GM12878 (cell line): ENCODE measurements at regions of chr18 and their contacts with region 1.

Region 1: DNA sequence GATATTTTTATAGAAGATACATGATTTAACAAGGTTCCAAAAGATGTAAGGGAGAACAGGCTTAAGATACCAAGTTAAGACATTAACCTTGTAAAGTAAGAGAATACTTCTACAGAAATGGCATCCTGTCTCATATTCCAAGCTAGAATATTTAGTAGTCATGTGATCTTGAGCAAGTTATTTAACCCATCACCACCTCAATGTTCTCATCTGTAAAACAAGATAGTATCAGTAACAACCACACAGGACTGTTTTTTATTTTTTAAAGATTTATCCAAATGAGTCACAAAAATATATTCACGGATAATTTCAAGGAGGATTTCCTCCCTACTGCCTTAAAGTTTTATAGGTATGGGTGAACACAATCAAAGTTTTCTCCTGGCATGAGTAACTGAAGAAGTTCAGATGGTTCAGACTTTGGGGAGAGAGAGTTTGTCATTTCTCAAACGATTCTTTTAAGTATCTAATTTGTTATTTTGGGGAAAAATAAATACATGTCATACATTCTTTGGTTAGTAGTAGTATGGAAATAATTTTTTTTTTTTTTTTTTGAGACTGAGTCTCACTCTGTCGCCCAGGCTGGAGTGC is 25.9 kb downstream of the ROCK1 start:
- DNase-seq: no peak
- ATAC-seq: no peak
- H3K4me3 ChIP-seq: no peak overlapping the region
- H3K27ac ChIP-seq: no peak overlapping the region
- H3K4me1 ChIP-seq: no peaks in the 10 kb centered on the region
- H3K27me3 ChIP-seq: no peaks in the 10 kb centered on the region
- CTCF ChIP-seq: no peak
- EP300 ChIP-seq: no peak
- POLR2A ChIP-seq: no peak
- RAD21 ChIP-seq: no peak

Region 2: GRCh38 chr18:21105936-21106335 is 20.3 kb after region 1 on chr18:
- CTCF ChIA-PET with region 1: interaction called, 3 read pairs
- POLR2A ChIA-PET with region 1: no interaction called
- RAD21 ChIA-PET with region 1: interaction called, 3 read pairs
- SMC1A ChIA-PET with region 1: interaction called, 8 read pairs
- in situ Hi-C with region 1: no loop called
- intact Hi-C with region 1: loop called (anchors 2 kb)
- DNase-seq: no peak
- ATAC-seq: peak; percentile 71
- H3K4me3 ChIP-seq: peak overlapping the region; percentile 84
- H3K27ac ChIP-seq: no peak overlapping the region
- H3K4me1 ChIP-seq: no peaks in the 10 kb centered on the region
- H3K27me3 ChIP-seq: no peaks in the 10 kb centered on the region
- CTCF ChIP-seq: no peak
- EP300 ChIP-seq: no peak
- POLR2A ChIP-seq: no peak
- RAD21 ChIP-seq: no peak

Region 3: GRCh38 chr18:21230436-21230835 is 144.8 kb after region 1 on chr18:
- CTCF ChIA-PET with region 1: no interaction called
- POLR2A ChIA-PET with region 1: no interaction called
- RAD21 ChIA-PET with region 1: no interaction called
- SMC1A ChIA-PET with region 1: no interaction called
- in situ Hi-C with region 1: no loop called
- intact Hi-C with region 1: no loop called
- DNase-seq: no peak
- ATAC-seq: no peak
- H3K4me3 ChIP-seq: no peak overlapping the region
- H3K27ac ChIP-seq: no peak overlapping the region
- H3K4me1 ChIP-seq: no peaks in the 10 kb centered on the region
- H3K27me3 ChIP-seq: no peaks in the 10 kb centered on the region
- CTCF ChIP-seq: no peak
- EP300 ChIP-seq: no peak
- POLR2A ChIP-seq: no peak
- RAD21 ChIP-seq: no peak

Region 4: GRCh38 chr18:21509062-21509461 is 423.4 kb after region 1 on chr18:
- CTCF ChIA-PET with region 1: no interaction called
- POLR2A ChIA-PET with region 1: no interaction called
- RAD21 ChIA-PET with region 1: no interaction called
- SMC1A ChIA-PET with region 1: no interaction called
- in situ Hi-C with region 1: no loop called
- intact Hi-C with region 1: no loop called
- DNase-seq: no peak
- ATAC-seq: peak; percentile 18; the same call in 1 of the 3 replicates
- H3K4me3 ChIP-seq: no peak overlapping the region
- H3K27ac ChIP-seq: no peak overlapping the region
- H3K4me1 ChIP-seq: no peaks in the 10 kb centered on the region
- H3K27me3 ChIP-seq: no peaks in the 10 kb centered on the region
- CTCF ChIP-seq: no peak
- EP300 ChIP-seq: no peak
- POLR2A ChIP-seq: no peak
- RAD21 ChIP-seq: no peak